ENCODE measurements at regions of chr1 and their contacts with region 1.

Region 1: GRCh38 chr1:16904560-16905111 is 8.9 kb downstream of the RNU1-2 start:
- DNase-seq: peak; percentile 85 to 94
- H3K4me3 ChIP-seq: peak overlapping the region; percentile 43 to 65 (median 48)
- H3K27ac ChIP-seq: peak overlapping the region; percentile 100
- H3K4me1 ChIP-seq: peaks cover 0 to 3% (median 0%) of the 10 kb centered on the region in 4 experiments; a peak in 3 of 7 replicates
- H3K27me3 ChIP-seq: no peaks in the 10 kb centered on the region
- CTCF ChIP-seq: no peak
- EP300 ChIP-seq: no peak
- POLR2A ChIP-seq: no peak
- RAD21 ChIP-seq: no peak

Region 2: DNA sequence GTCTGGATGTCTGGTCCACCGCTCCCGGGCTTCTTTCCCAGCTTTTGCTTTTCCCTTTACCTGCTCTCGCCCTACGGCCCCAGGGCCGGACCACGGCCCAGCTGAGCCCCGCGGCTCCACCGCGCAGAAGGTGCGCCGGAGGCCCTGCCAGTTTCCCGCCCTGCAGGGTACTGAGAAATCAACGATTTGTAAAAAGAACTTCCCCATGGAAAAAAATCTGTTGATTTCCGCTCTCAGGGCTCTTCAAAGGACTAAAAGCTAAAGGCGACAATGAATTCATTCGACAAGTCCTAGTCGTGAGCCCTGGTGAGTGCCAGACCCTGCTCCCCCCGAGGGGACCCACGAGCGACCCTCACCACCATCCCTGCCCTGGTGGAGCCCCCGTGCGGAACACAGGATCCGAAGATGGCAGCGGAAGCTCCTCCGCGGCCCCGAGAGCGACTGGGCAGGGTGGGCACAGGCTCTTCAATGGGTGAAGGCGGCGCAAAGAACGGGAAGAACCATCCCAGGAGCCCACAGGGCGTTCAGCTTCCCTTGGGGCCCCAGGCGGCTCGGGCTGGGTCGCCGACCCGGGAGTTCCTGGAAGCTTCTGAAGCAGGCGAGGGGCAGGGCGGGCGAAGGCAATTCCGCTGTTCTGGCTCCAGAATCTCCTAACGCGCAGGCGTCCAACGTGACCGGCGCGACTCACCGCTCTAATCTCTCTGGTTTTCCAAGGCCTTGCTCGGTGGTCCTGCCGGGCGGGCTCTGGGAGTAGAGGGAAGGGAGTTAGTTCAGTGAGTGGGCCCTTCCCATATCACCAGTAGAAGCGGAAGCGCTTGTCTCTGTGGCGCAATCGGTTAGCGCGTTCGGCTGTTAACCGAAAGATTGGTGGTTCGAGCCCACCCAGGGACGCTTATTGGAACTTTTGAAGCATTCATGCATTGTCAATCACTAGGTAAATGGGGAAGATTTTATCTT is 15.5 kb before region 1 on chr1:
- CTCF ChIA-PET with region 1: interaction called, 3 read pairs
- POLR2A ChIA-PET with region 1: interaction called, 16 read pairs
- DNase-seq: peak; percentile 81 to 92
- H3K4me3 ChIP-seq: peak overlapping the region; percentile 73 to 85 (median 77)
- H3K27ac ChIP-seq: peak overlapping the region; percentile 44; the same call in 1 of the 2 replicates
- H3K4me1 ChIP-seq: no peaks in the 10 kb centered on the region
- H3K27me3 ChIP-seq: no peaks in the 10 kb centered on the region
- CTCF ChIP-seq: no peak
- EP300 ChIP-seq: no peak
- POLR2A ChIP-seq: peak in 1 of 2 experiments; percentile 30; a peak in 1 of 3 replicates
- RAD21 ChIP-seq: no peak

Region 3: GRCh38 chr1:16921391-16922185 is 17.0 kb after region 1 on chr1 and contains the start of gene CROCC:
- CTCF ChIA-PET with region 1: interaction called, 4 read pairs
- POLR2A ChIA-PET with region 1: interaction called, 10 read pairs
- DNase-seq: peak; percentile 75 to 88
- H3K4me3 ChIP-seq: peak within 1 kb of the TSS; percentile 42 to 79 (median 54)
- H3K27ac ChIP-seq: 0 out of 2 replicates have a peak within 1 kb of the TSS, but pooled peaks have one; percentile 32
- H3K4me1 ChIP-seq: peaks cover 0 to 29% (median 16%) of the 10 kb centered on the region in 4 experiments; a peak in 6 of 7 replicates
- H3K27me3 ChIP-seq: no peaks in the 10 kb centered on the region
- CTCF ChIP-seq: peak in 1 of 3 experiments; percentile 13; a peak in 1 of 4 replicates
- EP300 ChIP-seq: peak in 1 of 2 experiments; percentile 56; a peak in 1 of 3 replicates
- POLR2A ChIP-seq: peak in 1 of 2 experiments; percentile 83; a peak in 2 of 3 replicates
- RAD21 ChIP-seq: 0 out of 4 replicates have a peak, but pooled peaks of 1 of the 2 experiments have one; percentile 14
- total RNA-seq, gene CROCC: 39.5 and 42.3 TPM in 2 replicates

Region 4: GRCh38 chr1:16967095-16967575 is 62.5 kb after region 1 on chr1:
- CTCF ChIA-PET with region 1: no interaction called
- POLR2A ChIA-PET with region 1: no interaction called
- DNase-seq: no peak
- H3K4me3 ChIP-seq: no peak overlapping the region
- H3K27ac ChIP-seq: no peak overlapping the region
- H3K4me1 ChIP-seq: peaks cover 0 to 10% (median 6%) of the 10 kb centered on the region in 4 experiments; a peak in 6 of 7 replicates
- H3K27me3 ChIP-seq: no peaks in the 10 kb centered on the region
- CTCF ChIP-seq: no peak
- EP300 ChIP-seq: no peak
- POLR2A ChIP-seq: no peak
- RAD21 ChIP-seq: no peak

Measured in H1 (cell line).